Naive thymus-derived CD4-positive, alpha-beta T cell (primary cell): ENCODE measurements at regions of chr7 and their contacts with region 1.

Region 1: DNA sequence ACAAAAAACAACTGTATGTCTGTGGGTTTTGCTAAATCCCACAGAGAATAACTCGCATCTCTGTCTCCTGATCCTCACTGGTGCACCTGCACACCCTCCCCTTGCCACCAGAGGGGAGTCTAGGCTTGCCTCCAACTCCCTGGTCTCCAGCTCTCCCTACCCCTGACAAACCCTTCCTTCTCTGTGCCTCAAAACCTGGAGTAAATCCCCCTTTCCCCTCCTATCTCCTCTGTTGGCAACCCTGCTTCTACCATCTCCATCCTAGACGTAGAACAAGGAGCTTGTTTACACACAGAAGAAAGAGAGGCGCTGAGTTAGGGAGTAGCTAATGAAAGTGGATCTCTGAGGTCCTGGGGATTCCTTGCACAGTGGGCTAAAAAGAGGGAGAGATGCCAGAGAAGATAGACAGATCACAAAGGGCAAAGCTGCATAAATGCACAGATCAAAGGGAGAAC is 6.0 kb downstream of the MBLAC1 start:
- DNase-seq: peak in 8 of 9 donors; percentile 53 to 77 (median 64)
- ATAC-seq: peak; percentile 89
- H3K4me3 ChIP-seq: no peak overlapping the region
- H3K4me3 Mint-ChIP-seq: no peak overlapping the region
- H3K27ac ChIP-seq: no peak overlapping the region
- H3K27ac Mint-ChIP-seq: peak overlapping the region in 7 of 9 donors; percentile 24 to 73 (median 49)
- H3K4me1 ChIP-seq: peaks cover 13 to 24% of the 10 kb centered on the region in 2 donors
- H3K4me1 Mint-ChIP-seq: peaks cover 4 to 31% (median 23%) of the 10 kb centered on the region in 7 donors
- H3K27me3 ChIP-seq: no peaks in the 10 kb centered on the region
- H3K27me3 Mint-ChIP-seq: no peaks in the 10 kb centered on the region

Region 2: GRCh38 chr7:99975782-99976521 is 156.8 kb before region 1 on chr7 and contains the start of gene AZGP1:
- CTCF ChIA-PET with region 1: interaction called, 14 read pairs
- POLR2A ChIA-PET with region 1: no interaction called
- intact Hi-C with region 1: loop called (anchors 1 to 5 kb)
- DNase-seq: no peak
- ATAC-seq: no peak
- H3K4me3 ChIP-seq: no peak within 1 kb of the TSS
- H3K4me3 Mint-ChIP-seq: no peak within 1 kb of the TSS
- H3K27ac ChIP-seq: no peak within 1 kb of the TSS
- H3K27ac Mint-ChIP-seq: no peak within 1 kb of the TSS
- H3K4me1 ChIP-seq: no peaks in the 10 kb centered on the region
- H3K4me1 Mint-ChIP-seq: peaks cover 0 to 12% (median 5%) of the 10 kb centered on the region in 7 donors
- H3K27me3 ChIP-seq: no peaks in the 10 kb centered on the region
- H3K27me3 Mint-ChIP-seq: peaks cover 0 to 22% (median 3%) of the 10 kb centered on the region in 5 donors
- total RNA-seq, gene AZGP1: not detected

Region 3: DNA sequence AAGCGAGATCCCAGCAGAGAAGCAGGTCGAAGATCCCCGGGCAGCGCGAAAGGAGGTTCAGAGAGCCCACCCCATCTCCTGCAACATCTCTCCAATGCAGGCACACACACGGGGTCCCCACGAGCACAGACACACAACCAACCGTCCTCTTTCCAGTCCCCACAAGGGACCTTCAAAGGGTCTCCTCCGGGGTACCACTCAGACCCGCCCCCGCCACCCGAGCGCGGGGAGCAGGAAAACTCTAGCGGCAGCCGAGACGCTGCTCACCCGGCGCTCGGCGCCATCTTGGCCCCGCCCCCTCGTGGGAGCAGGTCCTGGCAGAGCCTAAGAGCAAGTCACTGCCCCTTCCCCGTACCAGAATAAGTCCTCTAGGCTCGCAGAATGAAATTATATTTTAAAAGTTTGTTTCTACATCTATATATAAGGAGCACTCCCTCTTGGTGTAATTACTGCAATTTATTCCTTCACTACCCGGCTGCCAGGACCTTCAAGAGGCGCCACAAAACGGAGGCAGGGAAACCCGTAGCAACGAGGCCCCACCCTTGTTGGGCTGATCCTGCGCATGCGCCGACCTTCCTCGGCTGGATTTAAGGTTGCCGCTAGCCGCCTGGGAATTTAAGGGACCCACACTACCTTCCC is 13.5 kb before region 1 on chr7 and contains the starts of genes CNPY4 and TAF6:
- CTCF ChIA-PET with region 1: interaction called, 5 read pairs
- POLR2A ChIA-PET with region 1: interaction called, 15 read pairs
- intact Hi-C with region 1: loop called (anchors 1 kb)
- DNase-seq: peak; percentile 88 to 97 (median 95)
- ATAC-seq: peak; percentile 88
- H3K4me3 ChIP-seq: peak within 1 kb of the TSS; percentile 100
- H3K4me3 Mint-ChIP-seq: peak within 1 kb of the TSS; percentile 90 to 100 (median 98)
- H3K27ac ChIP-seq: peak within 1 kb of the TSS; percentile 88
- H3K27ac Mint-ChIP-seq: peak within 1 kb of the TSS; percentile 97 to 99 (median 98)
- H3K4me1 ChIP-seq: peaks cover 12 to 19% of the 10 kb centered on the region in 2 donors
- H3K4me1 Mint-ChIP-seq: peaks cover 18 to 34% (median 28%) of the 10 kb centered on the region in 7 donors
- H3K27me3 ChIP-seq: no peaks in the 10 kb centered on the region
- H3K27me3 Mint-ChIP-seq: no peaks in the 10 kb centered on the region
- total RNA-seq, gene CNPY4: 22.1 to 68.2 (median 40.3) TPM
- total RNA-seq, gene TAF6: 39.5 to 68.1 (median 55.0) TPM

Region 4: DNA sequence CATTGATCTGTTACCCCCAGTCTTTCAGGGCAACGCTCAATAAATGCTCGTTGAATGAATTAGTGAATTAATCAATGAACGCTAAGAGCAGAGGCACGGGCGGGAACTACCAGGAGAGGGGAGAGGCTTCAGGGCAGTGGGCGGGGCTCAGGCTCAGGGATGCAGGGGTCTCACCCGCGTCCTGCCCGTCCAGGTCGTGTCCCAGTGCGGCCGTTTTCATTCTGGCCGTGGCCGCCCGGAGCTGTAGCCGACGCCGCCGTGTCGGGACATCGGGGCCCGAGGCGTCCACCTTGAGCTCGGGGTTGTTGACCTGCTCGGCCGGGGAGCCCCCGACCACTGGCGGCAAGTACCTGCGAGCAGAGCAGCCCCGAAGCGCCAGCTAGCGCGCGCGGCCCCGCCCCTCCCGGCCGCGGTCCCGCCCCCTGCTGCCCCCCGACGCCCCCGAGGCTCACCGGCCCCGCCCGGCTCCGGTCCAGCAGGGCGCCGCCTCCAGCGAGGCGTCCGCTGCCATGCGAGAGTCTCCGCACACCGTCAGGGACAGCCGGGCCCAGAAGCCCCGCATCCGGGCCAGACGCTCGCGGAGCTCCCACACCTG is 38.5 kb after region 1 on chr7:
- CTCF ChIA-PET with region 1: interaction called, 18 read pairs
- POLR2A ChIA-PET with region 1: interaction called, 14 read pairs
- intact Hi-C with region 1: loop called in 1 of 2 experiments (anchors 5 kb)
- DNase-seq: peak in 3 of 9 donors; percentile 23 to 38 (median 25)
- ATAC-seq: peak; percentile 40
- H3K4me3 ChIP-seq: peak overlapping the region; percentile 56
- H3K4me3 Mint-ChIP-seq: peak overlapping the region; percentile 65 to 95 (median 90)
- H3K27ac ChIP-seq: peak overlapping the region; percentile 81
- H3K27ac Mint-ChIP-seq: peak overlapping the region in 8 of 9 donors; percentile 86 to 99 (median 95)
- H3K4me1 ChIP-seq: peaks cover 21 to 52% of the 10 kb centered on the region in 2 donors
- H3K4me1 Mint-ChIP-seq: peaks cover 51 to 78% (median 66%) of the 10 kb centered on the region in 7 donors
- H3K27me3 ChIP-seq: no peaks in the 10 kb centered on the region
- H3K27me3 Mint-ChIP-seq: peaks cover 0 to 27% (median 5%) of the 10 kb centered on the region in 5 donors

Region 5: GRCh38 chr7:100195222-100195621 is 62.5 kb after region 1 on chr7:
- CTCF ChIA-PET with region 1: interaction called, 34 read pairs
- POLR2A ChIA-PET with region 1: interaction called, 8 read pairs
- intact Hi-C with region 1: loop called in 1 of 2 experiments (anchors 1 kb)
- DNase-seq: no peak
- ATAC-seq: no peak
- H3K4me3 ChIP-seq: no peak overlapping the region
- H3K4me3 Mint-ChIP-seq: peak overlapping the region in 1 of 10 donors; percentile 10
- H3K27ac ChIP-seq: no peak overlapping the region
- H3K27ac Mint-ChIP-seq: peak overlapping the region in 3 of 9 donors; percentile 10 to 60 (median 41)
- H3K4me1 ChIP-seq: peaks cover 0 to 18% of the 10 kb centered on the region in 2 donors
- H3K4me1 Mint-ChIP-seq: peaks cover 9 to 58% (median 49%) of the 10 kb centered on the region in 7 donors
- H3K27me3 ChIP-seq: no peaks in the 10 kb centered on the region
- H3K27me3 Mint-ChIP-seq: no peaks in the 10 kb centered on the region

Region 6: GRCh38 chr7:100271716-100272537 is 139.2 kb after region 1 on chr7:
- CTCF ChIA-PET with region 1: no interaction called
- POLR2A ChIA-PET with region 1: no interaction called
- intact Hi-C with region 1: loop called in 1 of 2 experiments (anchors 2 kb)
- DNase-seq: peak; percentile 97 to 99 (median 98)
- ATAC-seq: peak; percentile 96
- H3K4me3 ChIP-seq: peak overlapping the region; percentile 61
- H3K4me3 Mint-ChIP-seq: peak overlapping the region; percentile 78 to 89 (median 82)
- H3K27ac ChIP-seq: peak overlapping the region; percentile 61
- H3K27ac Mint-ChIP-seq: peak overlapping the region in 4 of 9 donors; percentile 21 to 84 (median 46)
- H3K4me1 ChIP-seq: peaks cover 0 to 4% of the 10 kb centered on the region in 2 donors
- H3K4me1 Mint-ChIP-seq: peaks cover 8 to 19% (median 17%) of the 10 kb centered on the region in 7 donors
- H3K27me3 ChIP-seq: no peaks in the 10 kb centered on the region
- H3K27me3 Mint-ChIP-seq: peaks cover 0 to 4% (median 0%) of the 10 kb centered on the region in 5 donors